Aorta (tissue), 5 donors: ENCODE measurements at regions of chr2 and their contacts with region 1.

Region 1: GRCh38 chr2:164841719-164842623 is at the start of gene COBLL1:
- DNase-seq: peak; percentile 86 to 91
- ATAC-seq: peak; percentile 87
- H3K4me3 ChIP-seq: peak within 1 kb of the TSS; percentile 76 to 94
- H3K27ac ChIP-seq: peak within 1 kb of the TSS; percentile 92 to 97
- H3K4me1 ChIP-seq: peaks cover 0 to 2% of the 10 kb centered on the region in 2 donors
- H3K27me3 ChIP-seq: no peaks in the 10 kb centered on the region
- total RNA-seq, gene COBLL1: 63.5 to 101 TPM

Region 2: GRCh38 chr2:164737612-164738081 is 104.3 kb before region 1 on chr2:
- intact Hi-C with region 1: loop called (anchors 2 kb)
- DNase-seq: peak in 1 of 2 donors; percentile 55
- ATAC-seq: peak; percentile 87
- H3K4me3 ChIP-seq: peak overlapping the region in 1 of 2 donors; percentile 26
- H3K27ac ChIP-seq: no peak overlapping the region
- H3K4me1 ChIP-seq: peaks cover 0 to 4% of the 10 kb centered on the region in 2 donors
- H3K27me3 ChIP-seq: no peaks in the 10 kb centered on the region

Region 3: DNA sequence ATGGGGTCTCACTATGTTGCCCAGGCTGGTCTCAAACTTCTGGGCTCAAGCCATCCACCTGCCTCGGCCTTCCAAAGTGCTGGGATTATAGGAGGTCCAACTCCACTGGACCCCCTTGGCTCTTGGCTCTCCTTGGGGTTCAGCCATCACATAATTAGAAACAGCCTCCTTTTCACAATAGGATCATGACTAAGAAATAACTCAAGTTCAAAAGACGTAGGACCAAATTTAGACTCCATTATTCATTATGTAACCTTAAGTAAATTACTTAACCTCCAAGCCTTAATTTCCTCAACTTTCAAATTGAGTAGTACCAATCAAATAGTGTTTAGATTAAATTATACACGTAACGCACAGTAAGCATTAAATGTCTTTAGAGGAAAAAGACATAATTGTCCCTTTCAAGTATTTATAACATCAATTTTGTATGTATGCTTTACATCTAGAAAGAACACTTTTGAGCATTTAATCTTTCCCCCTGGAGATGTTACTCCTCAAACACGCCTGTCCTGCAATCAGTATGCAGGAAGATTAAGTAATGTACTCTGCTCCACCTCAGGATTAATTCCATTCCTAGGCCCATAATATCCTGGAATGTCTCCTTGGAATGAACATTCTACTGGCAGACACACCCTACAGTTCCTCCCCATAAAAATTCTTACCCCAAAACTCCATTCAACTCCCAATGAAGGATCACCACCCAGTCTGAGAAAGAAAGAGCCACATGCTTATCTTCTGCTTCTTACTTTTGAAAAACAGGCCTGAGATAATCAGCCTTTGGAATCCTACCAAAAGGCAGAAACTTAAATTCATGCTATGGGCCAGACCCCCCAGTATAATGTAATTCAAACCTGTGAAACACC is 49.4 kb before region 1 on chr2:
- intact Hi-C with region 1: loop called in 1 of 2 experiments (anchors 5 kb)
- DNase-seq: no peak
- ATAC-seq: no peak
- H3K4me3 ChIP-seq: no peak overlapping the region
- H3K27ac ChIP-seq: peak overlapping the region; percentile 57 to 67
- H3K4me1 ChIP-seq: peaks cover 6 to 24% of the 10 kb centered on the region in 2 donors
- H3K27me3 ChIP-seq: no peaks in the 10 kb centered on the region

Region 4: DNA sequence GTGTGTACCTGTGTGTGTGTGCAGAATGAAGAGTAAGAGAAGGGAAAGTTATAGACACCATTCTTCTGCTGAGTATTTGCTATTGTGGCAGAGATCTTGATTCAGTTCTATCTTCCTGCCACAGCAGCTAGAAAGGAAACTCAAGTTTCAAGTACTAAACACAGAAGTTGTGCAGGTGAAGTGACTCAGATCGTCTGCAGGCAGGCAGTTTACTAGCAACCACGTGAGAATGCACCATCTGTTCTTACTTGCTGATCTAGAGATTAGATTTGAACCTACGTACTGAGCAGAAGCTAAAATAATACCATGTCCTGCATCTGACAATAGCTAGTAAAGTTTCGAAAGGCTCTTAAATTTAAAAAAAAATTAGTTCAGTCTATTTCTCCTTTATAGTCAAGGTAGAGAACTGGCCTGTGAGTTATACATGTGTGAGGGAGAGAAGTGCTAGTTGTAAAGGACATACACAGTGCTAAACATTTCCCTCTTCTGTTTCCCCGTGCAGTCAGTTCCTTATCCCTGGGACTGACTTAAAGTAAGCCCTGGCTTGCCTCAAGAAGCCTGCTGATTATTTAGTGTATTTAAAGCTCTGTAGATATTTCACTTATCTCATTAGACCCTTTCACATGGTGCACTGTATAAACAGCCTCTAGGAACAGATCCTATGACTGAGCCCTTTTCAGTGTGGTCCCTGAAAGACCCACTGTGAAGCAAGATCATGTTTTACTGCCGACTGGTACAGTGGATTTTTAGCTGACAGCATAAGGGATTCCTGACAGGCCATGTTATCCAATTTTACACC is 68.3 kb after region 1 on chr2:
- intact Hi-C with region 1: loop called (anchors 5 kb)
- DNase-seq: no peak
- ATAC-seq: peak; percentile 44
- H3K4me3 ChIP-seq: no peak overlapping the region
- H3K27ac ChIP-seq: peak overlapping the region; percentile 8 to 76
- H3K4me1 ChIP-seq: peaks cover 0 to 2% of the 10 kb centered on the region in 2 donors
- H3K27me3 ChIP-seq: no peaks in the 10 kb centered on the region

Region 5: GRCh38 chr2:164992818-164993217 is 150.8 kb after region 1 on chr2:
- intact Hi-C with region 1: loop called in 1 of 2 experiments (anchors 5 kb)
- DNase-seq: peak in 1 of 2 donors; percentile 45
- ATAC-seq: peak; percentile 75
- H3K4me3 ChIP-seq: no peak overlapping the region
- H3K27ac ChIP-seq: no peak overlapping the region
- H3K4me1 ChIP-seq: peaks cover 0 to 3% of the 10 kb centered on the region in 2 donors
- H3K27me3 ChIP-seq: no peaks in the 10 kb centered on the region